ENCODE measurements at regions of chr7 and their contacts with region 1.

Region 1: DNA sequence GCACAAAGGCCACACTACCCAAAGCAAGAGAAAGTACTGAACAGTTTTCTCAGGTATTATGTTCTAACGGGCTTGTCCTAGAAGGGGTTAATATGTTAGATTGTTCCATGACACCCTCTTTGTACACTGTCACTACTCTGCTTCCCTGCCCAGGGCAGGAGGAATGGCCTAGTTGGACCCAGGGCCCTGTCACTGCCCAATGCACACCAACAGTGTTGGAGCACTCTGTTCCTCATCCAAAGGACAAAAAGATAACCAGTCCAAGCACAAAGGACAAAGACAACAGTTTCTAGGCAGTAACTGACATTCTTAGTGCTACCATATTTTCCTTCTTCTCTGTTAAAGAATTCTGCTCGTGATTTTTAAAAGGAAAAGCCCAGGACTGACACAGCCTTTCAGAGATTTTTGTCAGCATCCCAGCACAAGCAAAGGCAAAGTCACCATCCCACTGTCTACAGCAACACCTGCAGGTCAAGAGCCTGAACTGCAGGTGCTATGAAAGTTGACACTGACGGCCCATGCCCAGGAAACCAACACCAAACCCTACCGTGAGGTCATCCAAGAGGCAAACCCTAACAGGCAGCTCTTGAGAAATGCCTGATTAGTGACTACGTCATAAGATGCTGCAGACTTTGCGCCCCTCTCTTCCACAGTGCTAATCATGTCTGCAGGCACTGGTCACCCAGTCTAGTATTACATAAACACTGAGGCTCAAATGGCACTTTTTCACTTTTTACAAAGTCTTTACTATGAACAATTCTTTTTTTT is 13.2 kb downstream of the NUDCD3 start:
- DNase-seq: peak; percentile 50 to 87 (median 72)
- H3K4me3 ChIP-seq: no peak overlapping the region
- H3K27ac ChIP-seq: peak overlapping the region in 1 of 5 donors; percentile 2
- H3K4me1 ChIP-seq: peaks cover 4 to 19% of the 10 kb centered on the region in 2 donors
- H3K27me3 ChIP-seq: no peaks in the 10 kb centered on the region
- CTCF ChIP-seq: peak; percentile 83 to 98 (median 94)
- POLR2A ChIP-seq: no peak

Region 2: GRCh38 chr7:44240983-44241510 is 236.2 kb before region 1 on chr7:
- intact Hi-C with region 1: loop called in 1 of 2 experiments (anchors 5 kb)
- DNase-seq: peak; percentile 75 to 91 (median 85)
- H3K4me3 ChIP-seq: peak overlapping the region in 1 of 4 donors; percentile 28
- H3K27ac ChIP-seq: no peak overlapping the region
- H3K4me1 ChIP-seq: no peaks in the 10 kb centered on the region
- H3K27me3 ChIP-seq: no peaks in the 10 kb centered on the region
- CTCF ChIP-seq: peak; percentile 51 to 84 (median 72)
- POLR2A ChIP-seq: no peak

Region 3: GRCh38 chr7:44247868-44248651 is 229.2 kb before region 1 on chr7:
- intact Hi-C with region 1: loop called (anchors 2 to 5 kb)
- DNase-seq: no peak
- H3K4me3 ChIP-seq: no peak overlapping the region
- H3K27ac ChIP-seq: no peak overlapping the region
- H3K4me1 ChIP-seq: no peaks in the 10 kb centered on the region
- H3K27me3 ChIP-seq: no peaks in the 10 kb centered on the region
- CTCF ChIP-seq: no peak
- POLR2A ChIP-seq: no peak

Measured in adrenal gland (tissue), 19 donors.